Heart right ventricle (tissue), 16 donors: ENCODE measurements at regions of chr20 and their contacts with region 1.

Region 1: GRCh38 chr20:47150403-47151152 is 205.9 kb downstream of the ZMYND8 start:
- DNase-seq: peak; percentile 44 to 50
- ATAC-seq: peak; percentile 88 to 94 (median 92)
- H3K4me3 ChIP-seq: no peak overlapping the region
- H3K27ac ChIP-seq: no peak overlapping the region
- H3K4me1 ChIP-seq: peaks cover 0 to 3% (median 0%) of the 10 kb centered on the region in 9 donors
- H3K27me3 ChIP-seq: peaks cover 0 to 5% (median 0%) of the 10 kb centered on the region in 7 donors
- CTCF ChIP-seq: peak in 8 of 9 donors; percentile 52 to 70 (median 63)

Region 2: DNA sequence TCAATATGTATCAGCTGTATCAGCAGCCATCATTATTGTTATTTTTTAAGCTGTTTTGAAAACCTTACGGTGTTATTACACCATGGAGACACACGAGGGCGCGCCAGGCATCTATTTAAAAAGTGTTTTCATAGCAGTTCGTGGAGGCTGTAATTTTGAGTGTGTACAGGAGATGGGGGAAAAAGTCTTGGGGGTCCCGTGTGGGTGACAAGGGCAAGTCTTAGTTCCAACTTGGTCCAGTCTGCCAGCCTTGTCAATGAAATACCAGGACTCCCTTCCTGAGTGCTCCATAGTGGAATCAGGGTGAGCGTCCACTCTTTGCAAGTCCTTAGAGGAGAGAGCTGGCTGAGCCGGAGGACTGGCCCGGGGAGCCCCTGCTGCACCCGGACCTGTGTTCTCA is 397.9 kb before region 1 on chr20:
- intact Hi-C with region 1: loop called in 8 of 10 experiments (anchors 1 to 5 kb)
- DNase-seq: peak; percentile 33 to 56
- ATAC-seq: peak in 4 of 8 donors; percentile 7 to 47 (median 37)
- H3K4me3 ChIP-seq: peak overlapping the region in 1 of 10 donors; percentile 14
- H3K27ac ChIP-seq: no peak overlapping the region
- H3K4me1 ChIP-seq: peaks cover 0 to 4% (median 0%) of the 10 kb centered on the region in 9 donors
- H3K27me3 ChIP-seq: peaks cover 0 to 23% (median 6%) of the 10 kb centered on the region in 7 donors
- CTCF ChIP-seq: peak; percentile 34 to 83 (median 75)

Region 3: DNA sequence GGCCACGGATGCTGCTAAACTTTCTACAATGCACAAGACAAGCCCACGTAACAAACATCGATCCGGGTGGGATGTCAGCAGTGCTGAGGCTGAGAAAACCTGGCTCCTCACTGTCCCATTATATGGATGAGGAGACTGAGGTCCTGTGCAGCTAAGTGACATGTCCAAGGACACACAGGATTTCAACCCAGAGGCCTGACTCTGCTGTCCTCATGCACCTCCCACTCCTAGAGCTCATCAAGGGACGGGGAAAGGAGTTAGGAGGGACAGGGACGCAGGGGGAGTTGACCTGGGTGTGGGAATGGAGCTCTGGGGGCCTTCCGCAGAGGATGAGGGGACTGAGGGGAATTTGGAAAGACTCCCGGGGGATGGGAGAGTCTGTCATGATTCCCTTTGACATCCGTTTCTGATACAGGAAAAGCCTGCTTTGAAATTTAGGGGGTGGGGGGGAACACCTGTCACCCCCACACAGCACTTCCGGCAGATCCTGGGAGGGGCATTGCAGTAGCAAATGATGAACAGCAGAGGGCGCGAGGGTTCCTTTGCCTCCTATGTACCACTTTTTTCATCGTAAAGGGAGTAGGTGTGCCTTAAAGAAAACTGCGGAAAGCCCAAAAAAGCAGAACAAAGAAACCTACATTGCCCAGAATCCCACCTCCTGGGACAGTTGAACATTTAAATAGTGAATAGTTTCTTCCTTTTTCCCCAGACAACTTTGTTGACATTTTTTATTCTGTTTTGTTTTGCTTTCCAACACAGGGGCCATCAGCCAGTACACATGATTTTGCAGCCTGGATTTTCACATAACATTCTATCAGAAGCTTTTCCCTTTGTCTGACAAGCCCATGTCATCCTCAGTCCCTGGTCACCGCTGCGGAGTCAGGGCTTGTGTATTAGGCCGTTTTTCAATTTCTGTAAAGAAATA is 392.6 kb before region 1 on chr20:
- intact Hi-C with region 1: loop called in 8 of 10 experiments (anchors 1 to 5 kb)
- DNase-seq: peak; percentile 35 to 37
- ATAC-seq: peak in 4 of 8 donors; percentile 23 to 56 (median 48)
- H3K4me3 ChIP-seq: no peak overlapping the region
- H3K27ac ChIP-seq: no peak overlapping the region
- H3K4me1 ChIP-seq: peaks cover 0 to 4% (median 0%) of the 10 kb centered on the region in 9 donors
- H3K27me3 ChIP-seq: peaks cover 0 to 13% (median 0%) of the 10 kb centered on the region in 7 donors
- CTCF ChIP-seq: peak; percentile 80 to 95 (median 92)

Region 4: DNA sequence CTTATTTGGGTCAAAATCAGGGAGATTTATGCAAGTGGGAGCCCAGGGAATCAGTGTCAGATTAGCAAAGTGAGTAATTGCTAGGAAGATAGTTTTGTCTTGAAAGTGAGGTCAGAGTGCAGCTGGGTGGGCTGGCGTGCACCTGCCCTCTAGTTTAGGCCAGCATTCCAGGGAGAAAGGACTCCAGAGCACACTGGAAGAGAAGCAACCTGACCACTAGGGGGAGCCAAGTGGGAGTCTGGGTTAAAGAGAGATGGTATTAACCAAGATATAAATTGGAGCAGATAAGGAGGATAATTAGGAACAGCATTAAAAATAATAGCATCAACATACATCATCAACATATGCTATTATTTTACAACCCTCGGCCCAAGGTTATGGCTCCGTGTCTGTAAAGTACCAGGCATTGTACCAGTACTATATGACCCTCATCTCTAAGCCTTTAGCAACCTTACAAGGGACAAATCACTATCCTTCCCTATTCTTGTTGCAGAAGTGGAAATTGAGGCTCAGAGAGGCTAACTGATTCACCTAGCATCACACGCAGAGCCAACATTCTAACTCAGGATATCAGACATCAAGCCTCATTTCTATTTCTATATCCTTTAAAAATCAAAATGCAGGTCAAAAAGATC is 383.3 kb before region 1 on chr20:
- intact Hi-C with region 1: loop called in 2 of 10 experiments (anchors 5 kb)
- DNase-seq: no peak
- ATAC-seq: no peak
- H3K4me3 ChIP-seq: no peak overlapping the region
- H3K27ac ChIP-seq: no peak overlapping the region
- H3K4me1 ChIP-seq: no peaks in the 10 kb centered on the region
- H3K27me3 ChIP-seq: peaks cover 0 to 38% (median 0%) of the 10 kb centered on the region in 7 donors
- CTCF ChIP-seq: peak in 8 of 9 donors; percentile 16 to 69 (median 52)

Region 5: DNA sequence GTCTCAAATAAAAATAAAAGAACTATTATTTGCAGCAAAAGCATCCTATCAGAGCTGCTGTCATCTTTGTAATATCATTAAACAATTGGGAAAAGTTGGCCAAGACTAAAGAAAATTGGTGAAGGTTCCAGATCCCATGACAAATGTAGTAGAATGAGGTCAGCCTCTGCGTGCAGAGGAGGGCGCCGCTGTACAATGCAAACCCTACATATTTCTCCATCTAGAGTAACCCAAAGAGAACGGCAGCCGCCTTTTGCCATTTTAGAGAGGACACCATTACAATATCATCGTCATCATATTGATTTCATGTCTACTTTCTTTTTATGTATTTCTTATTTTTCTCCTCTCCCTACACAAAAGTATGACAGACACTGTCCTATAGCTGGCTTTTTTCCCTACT is 146.4 kb after region 1 on chr20:
- intact Hi-C with region 1: no loop called
- DNase-seq: no peak
- ATAC-seq: peak in 1 of 8 donors; percentile 43
- H3K4me3 ChIP-seq: no peak overlapping the region
- H3K27ac ChIP-seq: peak overlapping the region in 2 of 10 donors; percentile 59
- H3K4me1 ChIP-seq: peaks cover 0 to 16% (median 7%) of the 10 kb centered on the region in 9 donors
- H3K27me3 ChIP-seq: no peaks in the 10 kb centered on the region
- CTCF ChIP-seq: peak in 5 of 9 donors; percentile 5 to 44 (median 20)